ENCODE measurements at regions of chr11 and their contacts with region 1.

Region 1: GRCh38 chr11:130213143-130213978 is 53.8 kb downstream of the ST14 start:
- DNase-seq: peak; percentile 3
- ATAC-seq: peak; percentile 86
- H3K4me3 ChIP-seq: no peak overlapping the region
- H3K27ac ChIP-seq: no peak overlapping the region
- H3K4me1 ChIP-seq: peaks cover 0 to 6% of the 10 kb centered on the region in 2 experiments; a peak in 1 of 4 replicates
- H3K27me3 ChIP-seq: no peaks in the 10 kb centered on the region
- CTCF ChIP-seq: peak; percentile 78 to 95 (median 85)
- POLR2A ChIP-seq: no peak
- RAD21 ChIP-seq: peak; percentile 91

Region 2: DNA sequence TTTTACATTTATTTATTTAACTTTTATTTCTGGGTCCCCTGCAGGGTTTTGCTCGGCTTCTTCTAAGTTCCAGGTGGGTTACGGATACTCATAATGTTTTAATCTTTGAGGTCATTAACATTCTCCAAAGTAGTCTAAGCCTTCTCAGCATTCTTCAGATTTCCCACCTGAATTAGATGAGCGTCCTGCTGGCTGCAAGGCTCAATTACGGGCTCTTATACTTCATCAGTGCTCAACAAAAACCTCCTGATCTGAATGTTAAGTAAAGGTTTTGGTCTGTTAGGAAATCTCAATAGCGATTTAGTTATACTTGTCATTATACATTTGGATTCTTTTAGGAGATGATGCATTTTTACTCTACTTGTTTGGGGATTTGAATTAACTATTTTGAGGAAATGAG is 290.7 kb before region 1 on chr11:
- CTCF ChIA-PET with region 1: no interaction called
- POLR2A ChIA-PET with region 1: no interaction called
- RAD21 ChIA-PET with region 1: no interaction called
- intact Hi-C with region 1: loop called (anchors 1 kb)
- DNase-seq: no peak
- ATAC-seq: peak; percentile 68
- H3K4me3 ChIP-seq: no peak overlapping the region
- H3K27ac ChIP-seq: no peak overlapping the region
- H3K4me1 ChIP-seq: peaks cover 0 to 5% of the 10 kb centered on the region in 2 experiments; a peak in 1 of 4 replicates
- H3K27me3 ChIP-seq: no peaks in the 10 kb centered on the region
- CTCF ChIP-seq: peak in 1 of 3 experiments; percentile 15; a peak in 1 of 6 replicates
- POLR2A ChIP-seq: no peak
- RAD21 ChIP-seq: no peak

Region 3: DNA sequence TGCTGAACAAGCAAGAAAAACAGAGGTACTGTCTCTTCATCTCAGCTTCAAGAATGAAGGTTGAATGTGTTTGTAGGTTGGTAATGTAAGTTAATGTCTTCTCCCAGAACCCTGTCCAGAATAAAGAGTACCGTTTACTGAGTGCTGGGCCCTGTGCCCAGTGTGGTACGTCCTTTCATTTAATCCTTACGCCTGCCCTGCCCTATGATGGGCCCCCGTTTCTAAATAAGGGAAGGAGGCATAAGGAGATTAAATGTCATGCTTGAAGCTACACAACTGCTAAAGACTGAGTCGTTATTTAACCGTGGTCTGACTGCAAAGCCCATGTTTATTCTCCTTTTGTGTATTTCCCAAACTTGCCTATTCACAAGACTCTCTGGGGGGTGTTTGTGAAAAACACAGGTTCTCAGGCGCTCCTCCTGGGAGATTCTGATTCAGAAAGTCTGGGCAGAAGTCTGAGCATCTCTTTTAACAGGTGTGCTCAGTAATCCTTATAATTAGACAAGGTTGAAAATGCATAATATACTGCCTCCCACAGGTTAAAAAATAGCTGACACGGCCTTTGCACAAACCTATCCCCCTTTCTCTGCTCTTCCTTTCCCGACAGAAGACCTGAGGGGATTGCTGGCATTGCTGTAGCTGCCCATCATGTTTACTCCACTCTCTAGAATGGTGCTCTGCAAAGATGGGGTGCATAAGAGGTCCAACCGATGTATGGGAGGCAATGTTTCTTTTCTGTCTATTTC is 157.7 kb after region 1 on chr11:
- CTCF ChIA-PET with region 1: interaction called, 12 read pairs
- POLR2A ChIA-PET with region 1: no interaction called
- RAD21 ChIA-PET with region 1: no interaction called
- intact Hi-C with region 1: loop called (anchors 2 kb)
- DNase-seq: no peak
- ATAC-seq: peak; percentile 73
- H3K4me3 ChIP-seq: no peak overlapping the region
- H3K27ac ChIP-seq: no peak overlapping the region
- H3K4me1 ChIP-seq: no peaks in the 10 kb centered on the region
- H3K27me3 ChIP-seq: peaks cover 18% of the 10 kb centered on the region; the same call in 1 of the 2 replicates
- CTCF ChIP-seq: peak; percentile 24 to 32 (median 28); a peak in 2 of 6 replicates
- POLR2A ChIP-seq: no peak
- RAD21 ChIP-seq: peak; percentile 55

Region 4: DNA sequence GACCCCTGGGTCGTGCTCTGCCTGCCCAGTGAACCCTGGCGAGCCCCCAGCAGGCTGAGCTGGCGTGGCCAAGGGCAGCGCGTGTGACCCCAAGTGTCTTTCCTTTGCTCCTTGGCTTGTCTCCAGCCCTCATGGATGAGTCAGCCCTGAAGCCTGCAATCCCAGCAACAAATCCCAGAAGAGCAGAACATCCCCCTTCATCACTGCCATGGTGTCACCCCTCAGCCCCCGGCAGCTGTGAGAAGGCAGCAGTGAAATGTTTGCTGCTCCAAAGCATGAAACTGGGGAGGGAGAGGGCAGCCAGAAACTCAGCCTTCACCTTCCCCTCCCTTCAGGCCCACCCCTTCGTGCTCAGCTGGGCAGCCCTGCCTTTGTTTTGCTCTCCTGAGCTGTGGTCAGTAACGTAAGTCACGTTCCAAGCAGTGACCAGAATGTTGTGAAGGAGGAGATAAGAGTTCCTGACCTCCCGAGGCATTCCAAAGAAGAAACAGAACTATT is 264.9 kb after region 1 on chr11:
- CTCF ChIA-PET with region 1: no interaction called
- POLR2A ChIA-PET with region 1: no interaction called
- RAD21 ChIA-PET with region 1: no interaction called
- intact Hi-C with region 1: no loop called
- DNase-seq: no peak
- ATAC-seq: peak; percentile 71
- H3K4me3 ChIP-seq: peak overlapping the region in 1 of 2 experiments; percentile 8; a peak in 1 of 4 replicates
- H3K27ac ChIP-seq: no peak overlapping the region
- H3K4me1 ChIP-seq: peaks cover 8 to 15% of the 10 kb centered on the region in 2 experiments; a peak in 3 of 4 replicates
- H3K27me3 ChIP-seq: no peaks in the 10 kb centered on the region
- CTCF ChIP-seq: no peak
- POLR2A ChIP-seq: no peak
- RAD21 ChIP-seq: no peak

Region 5: DNA sequence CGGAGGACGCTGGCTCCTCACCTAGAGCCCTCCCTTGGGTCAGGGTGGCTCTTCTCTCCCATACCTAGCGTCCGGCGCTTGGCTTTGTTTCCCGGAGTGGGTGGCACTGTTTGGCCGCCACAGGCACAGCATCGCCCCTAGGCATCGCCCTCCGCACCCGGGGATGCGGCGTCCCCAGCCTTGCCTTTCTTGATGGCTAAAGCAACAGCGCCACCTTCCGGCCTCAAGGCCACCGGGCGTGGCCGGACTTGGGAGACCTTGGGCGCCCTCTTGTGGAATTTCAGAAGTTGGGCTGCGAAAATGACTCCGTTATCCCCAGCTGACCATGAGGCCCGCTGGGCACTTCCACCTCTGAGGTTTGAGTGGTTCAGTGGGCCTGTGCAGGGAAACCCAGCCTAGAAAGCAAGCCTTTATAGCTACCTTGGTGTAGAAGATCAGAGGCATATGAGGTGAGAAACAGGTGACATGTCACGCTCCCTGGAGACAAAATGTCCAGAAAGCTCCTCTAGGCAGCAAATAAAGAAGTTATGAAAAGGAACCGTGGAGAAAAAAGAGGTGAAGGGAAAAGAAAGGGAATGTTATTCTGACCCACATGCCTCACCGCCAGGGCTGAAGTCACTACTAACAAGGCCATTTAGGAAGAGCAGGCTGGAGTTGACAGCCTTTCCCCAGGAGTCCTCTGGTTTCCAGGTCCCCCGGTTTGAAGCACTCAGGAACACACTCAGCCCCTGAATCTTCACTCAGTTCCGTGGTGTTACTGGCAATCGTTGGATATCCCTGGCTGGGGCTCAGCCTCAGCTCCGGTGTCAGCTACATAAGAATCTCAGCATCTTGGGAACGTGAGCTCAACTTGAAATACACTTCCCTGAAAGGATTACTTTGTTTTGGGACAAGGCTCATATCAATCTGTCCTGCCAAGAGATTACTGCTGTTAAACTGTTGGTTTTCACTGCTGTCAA is 648.8 kb after region 1 on chr11:
- CTCF ChIA-PET with region 1: interaction called, 4 read pairs
- POLR2A ChIA-PET with region 1: no interaction called
- RAD21 ChIA-PET with region 1: no interaction called
- intact Hi-C with region 1: loop called (anchors 1 kb)
- DNase-seq: peak; percentile 90
- ATAC-seq: peak; percentile 94
- H3K4me3 ChIP-seq: no peak overlapping the region
- H3K27ac ChIP-seq: no peak overlapping the region
- H3K4me1 ChIP-seq: no peaks in the 10 kb centered on the region
- H3K27me3 ChIP-seq: no peaks in the 10 kb centered on the region
- CTCF ChIP-seq: peak; percentile 99 to 100 (median 99)
- POLR2A ChIP-seq: no peak
- RAD21 ChIP-seq: peak; percentile 100

Region 6: GRCh38 chr11:130894322-130895025 is 681.1 kb after region 1 on chr11:
- CTCF ChIA-PET with region 1: interaction called, 4 read pairs
- POLR2A ChIA-PET with region 1: no interaction called
- RAD21 ChIA-PET with region 1: no interaction called
- intact Hi-C with region 1: loop called (anchors 10 kb)
- DNase-seq: peak; percentile 38
- ATAC-seq: peak; percentile 97
- H3K4me3 ChIP-seq: no peak overlapping the region
- H3K27ac ChIP-seq: no peak overlapping the region
- H3K4me1 ChIP-seq: no peaks in the 10 kb centered on the region
- H3K27me3 ChIP-seq: no peaks in the 10 kb centered on the region
- CTCF ChIP-seq: peak; percentile 64 to 94 (median 82); a peak in 5 of 6 replicates
- POLR2A ChIP-seq: no peak
- RAD21 ChIP-seq: peak; percentile 67